ENCODE measurements at regions of chr2 and their contacts with region 1.

Region 1: GRCh38 chr2:102020596-102021181 is 28.9 kb downstream of the IL1R2 start:
- DNase-seq: peak; percentile 61 to 82 (median 76)
- ATAC-seq: peak; percentile 96
- H3K4me3 ChIP-seq: no peak overlapping the region
- H3K4me3 Mint-ChIP-seq: no peak overlapping the region
- H3K27ac ChIP-seq: no peak overlapping the region
- H3K27ac Mint-ChIP-seq: no peak overlapping the region
- H3K4me1 ChIP-seq: no peaks in the 10 kb centered on the region
- H3K4me1 Mint-ChIP-seq: peaks cover 0 to 12% (median 0%) of the 10 kb centered on the region in 7 donors
- H3K27me3 ChIP-seq: no peaks in the 10 kb centered on the region
- H3K27me3 Mint-ChIP-seq: peaks cover 0 to 5% (median 0%) of the 10 kb centered on the region in 5 donors

Region 2: DNA sequence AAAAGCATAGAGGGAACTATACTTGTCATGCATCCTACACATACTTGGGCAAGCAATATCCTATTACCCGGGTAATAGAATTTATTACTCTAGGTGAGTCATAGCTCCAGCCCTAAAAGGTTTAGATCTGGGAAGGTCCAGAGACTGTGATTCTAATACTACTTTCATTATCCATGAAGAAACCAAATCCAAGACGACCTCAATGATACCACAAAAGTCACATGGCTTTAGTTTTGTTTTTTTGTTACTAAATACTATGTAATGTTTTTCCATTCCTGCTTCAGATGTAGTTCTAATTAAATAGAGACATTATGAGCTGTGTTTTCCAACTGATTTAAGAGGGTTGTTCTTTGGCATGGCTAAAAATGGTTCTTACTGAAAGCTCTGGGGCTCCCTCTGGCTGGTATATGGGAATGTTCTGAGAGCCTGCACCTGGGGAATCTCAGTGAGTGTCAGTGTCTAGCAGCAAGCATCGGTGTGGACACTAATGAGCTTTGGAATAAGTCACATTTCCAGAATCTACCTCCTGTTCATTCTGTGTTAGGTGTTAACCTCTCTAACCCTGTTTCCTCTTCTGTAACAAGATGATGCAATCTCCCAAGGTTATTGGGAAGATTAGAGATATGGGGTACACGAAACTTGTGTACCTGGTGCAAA is 145.6 kb after region 1 on chr2:
- CTCF ChIA-PET with region 1: interaction called, 4 read pairs
- POLR2A ChIA-PET with region 1: no interaction called
- intact Hi-C with region 1: loop called in 1 of 2 experiments (anchors 1 kb)
- DNase-seq: peak in 1 of 9 donors; percentile 14
- ATAC-seq: no peak
- H3K4me3 ChIP-seq: no peak overlapping the region
- H3K4me3 Mint-ChIP-seq: no peak overlapping the region
- H3K27ac ChIP-seq: no peak overlapping the region
- H3K27ac Mint-ChIP-seq: no peak overlapping the region
- H3K4me1 ChIP-seq: no peaks in the 10 kb centered on the region
- H3K4me1 Mint-ChIP-seq: peaks cover 0 to 5% (median 0%) of the 10 kb centered on the region in 7 donors
- H3K27me3 ChIP-seq: no peaks in the 10 kb centered on the region
- H3K27me3 Mint-ChIP-seq: peaks cover 0 to 5% (median 0%) of the 10 kb centered on the region in 5 donors

Region 3: GRCh38 chr2:102473020-102473419 is 452.3 kb after region 1 on chr2 and contains the start of gene SLC9A4:
- CTCF ChIA-PET with region 1: no interaction called
- POLR2A ChIA-PET with region 1: no interaction called
- intact Hi-C with region 1: no loop called
- DNase-seq: peak in 6 of 9 donors; percentile 27 to 45 (median 36)
- ATAC-seq: peak; percentile 60
- H3K4me3 ChIP-seq: no peak within 1 kb of the TSS
- H3K4me3 Mint-ChIP-seq: no peak within 1 kb of the TSS
- H3K27ac ChIP-seq: no peak within 1 kb of the TSS
- H3K27ac Mint-ChIP-seq: no peak within 1 kb of the TSS
- H3K4me1 ChIP-seq: no peaks in the 10 kb centered on the region
- H3K4me1 Mint-ChIP-seq: no peaks in the 10 kb centered on the region
- H3K27me3 ChIP-seq: no peaks in the 10 kb centered on the region
- H3K27me3 Mint-ChIP-seq: peaks cover 16 to 55% (median 34%) of the 10 kb centered on the region in 5 donors
- total RNA-seq, gene SLC9A4: 0.05 to 0.15 (median 0.08) TPM